Right ventricle myocardium superior (tissue), 1 donor: ENCODE measurements at regions of chr7 and their contacts with region 1.

Region 1: DNA sequence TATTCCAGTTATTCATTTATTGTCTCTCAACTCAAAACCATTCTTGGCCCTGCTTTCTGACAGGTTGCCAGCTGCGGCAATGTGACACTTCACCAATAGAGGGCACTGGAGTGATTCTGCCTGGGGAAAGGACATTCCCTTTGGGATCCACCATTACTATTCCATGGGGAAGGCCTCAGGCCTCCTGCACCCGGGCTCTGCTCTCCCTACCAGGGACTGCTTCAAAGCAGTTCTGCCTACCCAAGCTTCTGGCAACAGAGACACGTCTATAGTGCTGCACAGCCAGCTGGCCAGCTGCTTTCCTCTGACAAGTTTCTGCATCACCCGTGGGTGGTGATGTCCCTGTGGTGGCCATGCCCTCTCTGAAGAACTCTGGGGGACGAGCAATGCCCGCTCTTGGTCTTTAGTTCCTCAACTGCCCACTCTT is 163.8 kb downstream of the ELMO1 start:
- DNase-seq: peak; percentile 70
- ATAC-seq: peak; percentile 37

Region 2: GRCh38 chr7:37031571-37032257 is 253.1 kb before region 1 on chr7:
- intact Hi-C with region 1: no loop called
- DNase-seq: peak; percentile 57
- ATAC-seq: peak; percentile 99

Region 3: DNA sequence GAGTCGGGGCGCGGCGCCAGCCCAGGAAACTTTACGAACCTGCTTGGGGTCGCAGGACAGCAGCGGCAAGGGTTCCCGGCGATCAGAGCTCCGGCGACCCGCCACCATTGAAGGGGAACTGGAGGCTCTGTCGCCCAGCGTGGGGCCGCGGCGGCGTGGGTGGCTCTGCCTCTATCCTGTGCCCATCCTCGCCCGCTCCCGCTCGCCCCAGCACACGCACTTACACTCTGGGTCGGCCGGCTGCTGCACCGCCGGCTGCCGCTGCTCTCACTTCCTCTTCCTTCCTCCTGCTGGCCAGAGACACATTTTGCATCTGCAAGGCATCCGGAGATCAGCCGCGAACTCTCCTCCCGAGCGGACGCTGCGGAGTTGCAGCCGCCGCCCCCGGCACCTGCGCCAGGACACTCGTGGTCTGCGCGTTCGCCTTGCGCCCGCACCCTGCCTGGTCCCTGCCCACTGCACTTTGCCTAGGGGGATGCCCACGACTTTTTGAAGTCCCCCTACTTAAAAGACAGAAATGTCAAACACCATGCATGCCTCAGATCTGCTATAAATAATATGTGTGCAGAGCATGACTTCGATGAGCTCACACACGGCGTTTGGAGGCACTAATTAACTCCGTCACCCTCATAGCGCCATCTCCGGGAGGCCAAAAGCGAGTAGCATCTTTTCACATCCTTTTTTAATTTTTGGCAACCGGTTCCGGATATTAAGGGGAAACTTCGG is 164.0 kb after region 1 on chr7 and contains the start of gene ELMO1:
- intact Hi-C with region 1: loop called (anchors 10 kb)
- DNase-seq: peak; percentile 89
- ATAC-seq: peak; percentile 92
- total RNA-seq, gene ELMO1: 11.9 TPM